ENCODE measurements at regions of chr16 and their contacts with region 1.

Region 1: DNA sequence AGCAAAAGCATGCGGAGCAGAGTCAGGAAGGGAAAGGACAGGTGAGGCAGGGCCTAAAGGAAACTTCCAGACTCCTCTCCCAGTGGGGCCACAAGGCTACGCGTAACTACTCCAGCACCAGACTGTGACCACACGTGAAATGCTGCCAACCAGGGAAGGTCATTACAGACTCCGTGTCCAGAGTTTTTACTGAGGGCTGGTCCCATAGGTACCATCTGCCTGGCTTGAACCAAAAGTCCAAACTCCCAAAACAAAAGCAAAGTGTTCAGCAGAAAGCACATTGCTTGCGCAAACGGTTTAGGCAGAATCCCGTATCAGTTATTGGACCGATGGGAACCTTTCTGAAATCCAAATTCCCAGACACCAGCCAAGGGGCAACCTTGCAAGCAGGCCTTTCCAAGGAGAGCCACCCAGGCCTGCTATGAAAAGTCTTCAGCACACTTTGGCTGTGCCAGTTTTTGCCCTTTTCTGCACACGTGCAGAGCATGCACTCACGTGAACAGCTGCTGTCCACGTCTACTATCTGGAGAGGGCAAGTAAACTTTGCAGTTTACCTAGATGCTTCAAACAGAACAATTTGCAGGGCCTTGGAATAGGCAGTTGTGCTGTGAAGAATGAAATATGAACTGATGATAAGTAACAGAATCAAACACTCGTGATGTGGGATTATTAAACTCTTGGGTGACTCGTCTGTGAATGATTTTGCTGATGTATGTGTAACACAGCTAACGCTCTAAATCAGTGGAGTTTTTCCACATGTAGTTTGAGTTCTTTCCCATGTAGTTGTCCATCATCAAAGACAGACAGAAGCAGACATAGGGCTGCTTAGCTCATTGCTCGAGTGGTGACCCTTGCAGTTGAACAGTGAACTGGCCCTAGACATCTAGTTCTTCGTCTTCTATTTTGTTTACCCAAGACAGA is 58.1 kb upstream of the CRISPLD2 start:
- DNase-seq: no peak
- ATAC-seq: no peak

Region 2: DNA sequence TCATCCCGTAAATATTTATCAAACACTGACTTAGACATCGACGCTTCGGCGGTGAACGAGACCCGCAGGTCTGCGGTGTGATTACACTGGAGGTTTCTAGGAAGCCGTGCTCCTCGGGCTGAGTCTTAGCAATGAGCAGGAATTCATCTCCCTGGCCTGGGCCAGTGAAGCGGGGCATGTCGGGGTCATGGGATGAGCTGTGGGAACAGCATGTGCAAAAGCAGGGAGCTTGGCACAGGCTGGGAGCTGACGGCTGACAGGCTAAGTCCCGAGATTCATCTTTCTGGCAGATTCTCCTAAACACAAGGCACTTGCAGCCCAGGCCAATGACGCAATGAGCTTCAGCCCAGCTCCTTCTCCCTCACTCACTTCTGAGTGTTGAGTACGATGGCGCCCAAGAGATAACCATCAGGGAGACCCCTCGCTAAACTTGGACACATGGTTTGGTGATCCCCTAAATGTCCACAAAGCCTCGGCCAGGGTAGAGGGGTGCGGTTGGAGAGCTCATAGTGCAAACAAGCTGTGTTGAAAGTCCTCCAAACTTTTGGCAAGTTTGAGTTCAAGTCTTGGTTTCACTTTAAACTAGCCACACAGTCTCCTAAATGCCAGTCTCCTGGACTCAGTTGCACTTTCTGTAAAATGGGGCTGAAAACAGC is 70.9 kb after region 1 on chr16:
- intact Hi-C with region 1: no loop called
- DNase-seq: peak; percentile 91
- ATAC-seq: peak; percentile 74 to 80

Region 3: GRCh38 chr16:84959045-84959576 is 197.4 kb after region 1 on chr16:
- intact Hi-C with region 1: loop called (anchors 5 kb)
- DNase-seq: no peak
- ATAC-seq: no peak